ENCODE measurements at regions of chr20 and their contacts with region 1.

Region 1: DNA sequence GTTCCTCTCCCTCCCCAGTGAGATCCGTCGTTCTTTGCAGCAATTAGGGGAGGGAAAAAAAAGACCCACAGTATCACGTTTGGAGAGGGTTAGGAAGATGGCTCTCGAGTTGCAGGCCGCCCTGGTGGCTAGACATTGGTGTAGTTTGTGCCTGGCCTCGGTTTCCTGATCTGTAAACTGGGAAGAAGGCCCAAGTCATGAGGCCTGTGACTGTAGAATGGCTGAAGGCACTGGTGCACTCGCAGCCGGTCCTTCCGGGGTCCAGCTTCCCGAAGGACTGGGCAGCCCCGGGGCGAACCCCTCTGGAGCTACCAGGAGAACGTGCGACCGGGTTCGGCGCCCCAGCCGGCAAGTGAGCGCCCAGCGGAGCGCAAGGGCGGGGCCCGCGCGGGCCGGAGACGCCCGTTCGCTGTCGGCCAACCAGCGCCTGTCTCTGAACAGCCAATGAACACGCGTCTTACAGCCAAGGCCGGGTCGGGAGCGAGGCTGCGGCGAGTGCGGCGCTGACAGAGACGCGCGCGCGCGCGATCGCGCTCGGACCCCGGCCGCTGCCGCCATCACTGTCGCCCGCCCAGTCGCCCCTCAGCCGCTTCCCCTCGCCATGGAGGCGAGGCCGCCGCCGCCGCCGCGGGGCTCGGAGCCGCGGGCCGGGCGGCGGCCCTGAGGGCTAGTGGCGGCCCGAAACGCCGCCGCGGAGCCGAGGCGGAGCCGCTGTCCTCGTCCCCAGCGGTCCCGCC is at the start of gene PTPRA:
- DNase-seq: peak; percentile 83 to 95 (median 91)
- ATAC-seq: peak; percentile 87
- H3K4me3 ChIP-seq: peak within 1 kb of the TSS; percentile 69 to 85
- H3K4me3 Mint-ChIP-seq: peak within 1 kb of the TSS; percentile 93
- H3K27ac ChIP-seq: peak within 1 kb of the TSS; percentile 49 to 61
- H3K27ac Mint-ChIP-seq: peak within 1 kb of the TSS; percentile 93
- H3K4me1 ChIP-seq: peaks cover 31% of the 10 kb centered on the region
- H3K4me1 Mint-ChIP-seq: peaks cover 39% of the 10 kb centered on the region
- H3K27me3 ChIP-seq: no peaks in the 10 kb centered on the region
- H3K27me3 Mint-ChIP-seq: no peaks in the 10 kb centered on the region
- CTCF ChIP-seq: no peak
- total RNA-seq, gene PTPRA: 68.2 to 71.9 TPM

Region 2: DNA sequence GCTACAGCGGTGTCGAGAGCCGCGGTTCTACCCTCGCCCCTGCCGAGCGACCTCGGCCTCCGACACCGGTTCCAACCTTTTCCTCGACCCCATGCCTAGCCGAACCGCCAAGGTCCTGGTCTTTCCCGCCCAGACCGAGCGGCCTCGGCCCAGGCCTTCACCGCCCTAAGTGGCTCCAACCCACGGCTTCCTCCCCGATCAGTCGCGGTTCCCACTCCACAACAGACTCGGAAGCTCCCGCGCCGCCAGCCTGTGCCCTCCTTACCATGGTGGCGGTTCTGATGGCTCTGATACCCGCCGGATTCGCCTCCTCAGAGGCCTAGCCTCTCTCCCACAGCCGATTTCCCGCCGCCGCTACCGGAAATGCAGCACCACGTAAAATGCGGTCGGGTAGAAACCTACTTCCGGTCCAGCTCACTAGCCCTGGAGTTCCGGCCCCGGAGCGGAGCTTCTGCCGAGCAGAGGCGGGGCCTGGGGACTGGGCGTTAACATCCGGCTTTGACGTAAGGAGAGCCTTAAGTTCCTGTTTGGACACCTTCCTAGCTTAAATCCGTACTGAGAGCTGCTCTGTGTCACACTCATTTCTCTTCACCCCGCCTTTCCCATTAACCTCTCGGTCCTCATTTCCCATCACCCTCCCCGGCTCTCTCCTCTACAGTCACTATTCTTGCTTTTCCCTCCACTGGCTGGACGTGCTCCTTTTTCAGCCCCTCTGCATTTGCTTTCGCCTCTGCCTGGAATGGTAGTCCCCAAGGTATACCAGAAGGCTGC is 402.6 kb before region 1 on chr20 and contains the start of gene SNRPB:
- CTCF ChIA-PET with region 1: no interaction called
- POLR2A ChIA-PET with region 1: no interaction called
- intact Hi-C with region 1: loop called in 1 of 2 experiments (anchors 10 kb)
- DNase-seq: peak; percentile 93 to 99 (median 97)
- ATAC-seq: peak; percentile 93
- H3K4me3 ChIP-seq: peak within 1 kb of the TSS; percentile 76 to 99
- H3K4me3 Mint-ChIP-seq: peak within 1 kb of the TSS; percentile 99
- H3K27ac ChIP-seq: peak within 1 kb of the TSS; percentile 95 to 99
- H3K27ac Mint-ChIP-seq: peak within 1 kb of the TSS; percentile 98
- H3K4me1 ChIP-seq: peaks cover 21% of the 10 kb centered on the region
- H3K4me1 Mint-ChIP-seq: peaks cover 44% of the 10 kb centered on the region
- H3K27me3 ChIP-seq: no peaks in the 10 kb centered on the region
- H3K27me3 Mint-ChIP-seq: no peaks in the 10 kb centered on the region
- CTCF ChIP-seq: no peak
- total RNA-seq, gene SNRPB: 176 to 180 TPM

Region 3: DNA sequence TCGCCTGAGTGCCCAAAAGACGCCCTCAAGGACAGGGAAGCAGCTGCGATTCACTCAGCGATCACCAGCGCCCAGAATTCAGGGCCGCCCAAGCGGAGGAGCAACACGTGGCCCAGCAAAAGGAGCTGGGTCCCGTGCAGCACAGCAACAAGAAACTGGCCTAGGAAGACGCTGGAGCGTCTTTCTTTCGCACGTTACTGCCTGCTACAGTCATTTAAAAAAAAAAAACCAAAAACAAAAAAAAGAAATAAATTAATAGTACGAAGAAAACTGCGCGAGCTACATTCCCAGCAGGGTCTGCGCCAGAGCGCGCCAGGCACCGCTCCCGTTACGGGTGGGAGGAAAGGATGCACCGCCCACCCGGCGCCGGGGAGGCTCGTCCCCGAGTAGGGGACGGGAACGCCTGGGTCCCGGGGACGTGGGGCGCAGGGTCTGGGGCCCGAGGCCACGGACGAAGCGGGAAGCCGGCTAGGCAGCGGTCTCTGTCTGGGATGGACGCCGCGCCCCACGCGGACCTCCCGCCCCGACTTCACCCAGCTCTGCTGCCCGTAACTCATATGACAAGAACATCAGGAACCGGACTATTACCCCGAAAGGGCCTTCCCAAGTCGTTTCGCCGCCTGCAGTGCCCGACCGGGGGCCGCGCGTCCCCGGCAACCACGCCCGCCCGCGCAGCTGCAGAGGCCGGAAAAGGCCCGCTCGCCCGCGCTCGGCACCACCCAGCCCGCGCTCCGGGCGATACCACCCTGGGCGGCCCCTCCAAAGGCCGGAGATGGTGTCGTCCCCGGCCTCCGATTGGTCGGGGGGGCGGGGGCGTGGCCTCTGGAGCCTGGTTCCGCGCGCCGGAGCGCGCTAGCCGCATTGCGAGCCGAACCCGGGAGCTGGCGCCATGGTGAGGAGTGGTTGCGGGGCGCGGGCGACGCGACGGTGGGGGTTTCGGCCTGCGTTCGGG is 221.1 kb before region 1 on chr20 and contains the start of gene NOP56:
- CTCF ChIA-PET with region 1: no interaction called
- POLR2A ChIA-PET with region 1: interaction called, 5 read pairs
- intact Hi-C with region 1: loop called (anchors 1 to 2 kb)
- DNase-seq: peak; percentile 91 to 98 (median 95)
- ATAC-seq: peak; percentile 92
- H3K4me3 ChIP-seq: peak within 1 kb of the TSS; percentile 52 to 85
- H3K4me3 Mint-ChIP-seq: peak within 1 kb of the TSS; percentile 88
- H3K27ac ChIP-seq: peak within 1 kb of the TSS; percentile 77 to 86
- H3K27ac Mint-ChIP-seq: peak within 1 kb of the TSS; percentile 87
- H3K4me1 ChIP-seq: peaks cover 20% of the 10 kb centered on the region
- H3K4me1 Mint-ChIP-seq: peaks cover 44% of the 10 kb centered on the region
- H3K27me3 ChIP-seq: no peaks in the 10 kb centered on the region
- H3K27me3 Mint-ChIP-seq: no peaks in the 10 kb centered on the region
- CTCF ChIP-seq: no peak
- total RNA-seq, gene NOP56: 311 to 317 TPM

Region 4: GRCh38 chr20:2752567-2753460 is 120.4 kb before region 1 on chr20:
- CTCF ChIA-PET with region 1: no interaction called
- POLR2A ChIA-PET with region 1: interaction called, 3 read pairs
- intact Hi-C with region 1: loop called in 1 of 2 experiments (anchors 5 kb)
- DNase-seq: peak in 8 of 9 experiments; percentile 18 to 76 (median 58)
- ATAC-seq: peak; percentile 35
- H3K4me3 ChIP-seq: peak overlapping the region; percentile 53 to 57
- H3K4me3 Mint-ChIP-seq: peak overlapping the region; percentile 85
- H3K27ac ChIP-seq: no peak overlapping the region
- H3K27ac Mint-ChIP-seq: no peak overlapping the region
- H3K4me1 ChIP-seq: peaks cover 26% of the 10 kb centered on the region
- H3K4me1 Mint-ChIP-seq: peaks cover 34% of the 10 kb centered on the region
- H3K27me3 ChIP-seq: no peaks in the 10 kb centered on the region
- H3K27me3 Mint-ChIP-seq: peaks cover 12% of the 10 kb centered on the region
- CTCF ChIP-seq: peak; percentile 78

Region 5: GRCh38 chr20:2894221-2894620 is 21.0 kb after region 1 on chr20:
- CTCF ChIA-PET with region 1: no interaction called
- POLR2A ChIA-PET with region 1: no interaction called
- intact Hi-C with region 1: no loop called
- DNase-seq: no peak
- ATAC-seq: no peak
- H3K4me3 ChIP-seq: no peak overlapping the region
- H3K4me3 Mint-ChIP-seq: no peak overlapping the region
- H3K27ac ChIP-seq: no peak overlapping the region
- H3K27ac Mint-ChIP-seq: no peak overlapping the region
- H3K4me1 ChIP-seq: peaks cover 11% of the 10 kb centered on the region
- H3K4me1 Mint-ChIP-seq: peaks cover 53% of the 10 kb centered on the region
- H3K27me3 ChIP-seq: no peaks in the 10 kb centered on the region
- H3K27me3 Mint-ChIP-seq: no peaks in the 10 kb centered on the region
- CTCF ChIP-seq: no peak

Region 6: DNA sequence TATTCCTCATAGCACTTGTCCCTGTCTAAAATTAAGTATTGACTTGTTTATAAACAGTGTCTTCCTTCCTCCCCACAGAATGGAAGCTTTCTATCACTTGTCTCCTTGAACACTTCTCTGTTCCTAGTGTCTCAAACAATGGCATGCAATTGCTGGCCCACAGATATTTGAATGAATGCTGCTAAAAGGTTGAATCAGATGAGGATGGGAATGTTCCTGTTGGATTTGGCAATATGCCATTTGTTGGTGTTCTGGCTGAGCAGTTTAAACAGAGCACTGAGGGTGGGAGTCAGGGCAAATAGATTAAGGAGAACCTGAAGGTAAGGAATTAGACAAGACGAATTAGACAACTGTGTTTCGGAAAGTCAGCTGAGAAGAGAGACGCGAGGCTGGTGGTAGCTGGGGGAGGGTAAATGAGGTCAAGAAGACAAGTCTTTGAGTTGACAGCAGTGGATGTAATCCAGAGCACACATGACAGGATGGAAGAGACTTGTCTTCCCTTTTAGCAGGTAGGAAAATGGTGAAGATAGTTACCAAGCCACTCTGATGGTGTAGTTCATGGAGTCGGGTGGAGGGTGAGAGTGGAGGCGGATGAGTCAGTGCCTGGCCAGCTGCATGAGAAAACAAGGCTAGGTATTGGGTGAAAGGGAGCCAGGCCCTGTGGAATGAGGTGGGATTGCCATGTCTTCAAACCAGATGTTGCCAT is 111.9 kb after region 1 on chr20:
- CTCF ChIA-PET with region 1: no interaction called
- POLR2A ChIA-PET with region 1: no interaction called
- intact Hi-C with region 1: loop called (anchors 2 to 5 kb)
- DNase-seq: no peak
- ATAC-seq: no peak
- H3K4me3 ChIP-seq: no peak overlapping the region
- H3K4me3 Mint-ChIP-seq: no peak overlapping the region
- H3K27ac ChIP-seq: peak overlapping the region in 1 of 2 experiments; percentile 80
- H3K27ac Mint-ChIP-seq: no peak overlapping the region
- H3K4me1 ChIP-seq: no peaks in the 10 kb centered on the region
- H3K4me1 Mint-ChIP-seq: peaks cover 4% of the 10 kb centered on the region
- H3K27me3 ChIP-seq: no peaks in the 10 kb centered on the region
- H3K27me3 Mint-ChIP-seq: no peaks in the 10 kb centered on the region
- CTCF ChIP-seq: no peak

Region 7: DNA sequence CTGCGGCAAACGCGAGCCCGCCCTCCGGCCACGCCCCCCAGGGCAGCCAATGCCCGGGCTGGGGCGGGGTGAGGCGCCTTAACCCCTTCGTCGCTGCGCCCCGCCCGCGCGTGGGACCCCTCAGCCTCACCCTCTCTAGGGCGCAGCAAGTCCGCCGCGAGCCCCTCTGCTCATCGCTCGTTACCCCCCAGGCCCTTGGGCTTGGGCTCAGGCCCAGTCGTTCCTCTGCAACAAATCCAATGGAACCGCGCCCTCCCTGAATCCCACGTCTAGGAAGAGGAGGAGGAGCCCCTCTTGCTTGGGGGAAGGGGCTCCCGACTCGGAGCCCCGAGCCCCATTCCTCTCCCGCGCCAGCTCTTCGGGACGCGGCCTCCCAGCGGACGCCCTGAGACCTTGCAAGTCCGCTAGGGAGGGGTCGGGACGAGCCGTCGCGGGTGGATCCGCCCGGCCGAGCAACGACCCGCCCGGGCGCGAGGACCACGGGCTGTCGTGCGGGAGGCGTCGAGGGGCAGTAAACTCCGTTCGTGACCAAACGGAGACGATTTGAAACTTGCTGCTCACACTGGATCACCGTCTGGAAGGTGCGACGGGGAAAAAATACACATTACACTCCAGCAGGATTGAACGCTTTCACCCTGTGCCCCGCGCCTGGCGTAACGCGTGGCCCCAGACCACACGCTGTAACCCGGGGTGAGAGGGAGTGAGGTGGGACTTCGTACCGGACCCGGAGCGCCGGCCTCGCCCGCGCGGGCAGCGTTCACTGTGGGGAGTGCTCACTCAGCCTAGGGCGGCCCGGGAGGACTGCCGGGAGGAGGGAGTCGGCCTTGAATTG is 300.6 kb after region 1 on chr20:
- CTCF ChIA-PET with region 1: no interaction called
- POLR2A ChIA-PET with region 1: no interaction called
- intact Hi-C with region 1: loop called in 1 of 2 experiments (anchors 5 kb)
- DNase-seq: peak; percentile 45 to 95 (median 90)
- ATAC-seq: peak; percentile 10
- H3K4me3 ChIP-seq: peak overlapping the region; percentile 81 to 96
- H3K4me3 Mint-ChIP-seq: peak overlapping the region; percentile 82
- H3K27ac ChIP-seq: peak overlapping the region in 1 of 2 experiments; percentile 97
- H3K27ac Mint-ChIP-seq: peak overlapping the region; percentile 62
- H3K4me1 ChIP-seq: peaks cover 13% of the 10 kb centered on the region
- H3K4me1 Mint-ChIP-seq: peaks cover 17% of the 10 kb centered on the region
- H3K27me3 ChIP-seq: peaks cover 0 to 7% of the 10 kb centered on the region in 2 experiments
- H3K27me3 Mint-ChIP-seq: peaks cover 10% of the 10 kb centered on the region
- CTCF ChIP-seq: no peak

Region 8: DNA sequence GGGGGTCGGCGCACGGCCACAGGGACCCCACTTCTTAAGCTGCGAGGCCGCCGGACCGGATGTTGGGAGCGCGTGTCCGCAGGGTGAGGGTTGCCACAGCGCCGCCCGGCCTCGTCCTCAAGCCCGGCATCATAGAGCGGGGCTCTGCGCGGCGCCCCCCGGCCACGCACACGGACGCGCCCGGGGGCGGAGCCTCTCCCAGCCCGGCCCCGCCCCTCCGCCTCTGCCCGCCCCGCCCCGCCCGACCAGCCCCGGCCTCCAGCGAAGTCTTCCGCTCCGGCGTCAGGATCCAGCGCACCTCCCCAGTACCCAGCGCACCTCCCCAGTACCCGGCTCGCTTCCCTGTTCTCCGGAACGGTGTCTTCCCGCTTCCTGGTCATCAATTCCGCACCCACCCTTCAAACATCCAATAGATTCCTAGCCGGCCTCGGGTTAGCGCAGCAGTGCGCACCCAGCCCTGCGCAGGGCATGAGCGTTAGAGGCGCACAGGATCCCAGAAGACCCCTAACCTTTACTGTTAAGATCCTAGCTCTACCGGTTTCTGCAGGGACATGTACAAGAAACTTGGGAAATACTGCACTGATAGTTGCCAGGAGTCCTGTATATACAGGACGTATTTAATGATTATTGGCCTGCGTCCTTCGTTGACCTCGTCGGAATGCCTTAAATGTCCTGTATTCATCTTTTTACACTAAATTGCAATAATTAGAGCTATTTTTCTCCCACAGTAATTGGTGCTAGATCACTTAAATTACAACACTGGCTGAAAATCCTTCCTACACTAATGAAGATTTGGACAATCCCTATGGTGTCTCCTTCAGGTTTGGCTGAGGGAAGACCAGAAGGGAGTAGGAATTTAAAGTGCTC is 534.8 kb after region 1 on chr20:
- CTCF ChIA-PET with region 1: no interaction called
- POLR2A ChIA-PET with region 1: no interaction called
- intact Hi-C with region 1: loop called (anchors 1 to 5 kb)
- DNase-seq: peak; percentile 40 to 87 (median 69)
- ATAC-seq: peak; percentile 67
- H3K4me3 ChIP-seq: peak overlapping the region; percentile 74 to 86
- H3K4me3 Mint-ChIP-seq: peak overlapping the region; percentile 99
- H3K27ac ChIP-seq: peak overlapping the region; percentile 53 to 59
- H3K27ac Mint-ChIP-seq: peak overlapping the region; percentile 94
- H3K4me1 ChIP-seq: peaks cover 6% of the 10 kb centered on the region
- H3K4me1 Mint-ChIP-seq: peaks cover 25% of the 10 kb centered on the region
- H3K27me3 ChIP-seq: peaks cover 0 to 1% of the 10 kb centered on the region in 2 experiments
- H3K27me3 Mint-ChIP-seq: no peaks in the 10 kb centered on the region
- CTCF ChIP-seq: no peak